Activated CD4-positive, alpha-beta T cell treated with anti-CD3 and anti-CD28 coated beads, Interleukin-2, amount 10 ng/mL, durations not matched to agents 24 days and 14 days (primary cell): ENCODE measurements at regions of chr6 and their contacts with region 1.

Region 1: GRCh38 chr6:30914076-30914853 is at the start of gene VARS2:
- DNase-seq: peak; percentile 98
- H3K4me3 Mint-ChIP-seq: peak within 1 kb of the TSS; percentile 92
- H3K27ac Mint-ChIP-seq: peak within 1 kb of the TSS; percentile 98
- H3K4me1 Mint-ChIP-seq: peaks cover 40% of the 10 kb centered on the region
- H3K27me3 Mint-ChIP-seq: no peaks in the 10 kb centered on the region
- total RNA-seq, gene VARS2: 74.8 and 84.2 TPM in 2 replicates

Region 2: DNA sequence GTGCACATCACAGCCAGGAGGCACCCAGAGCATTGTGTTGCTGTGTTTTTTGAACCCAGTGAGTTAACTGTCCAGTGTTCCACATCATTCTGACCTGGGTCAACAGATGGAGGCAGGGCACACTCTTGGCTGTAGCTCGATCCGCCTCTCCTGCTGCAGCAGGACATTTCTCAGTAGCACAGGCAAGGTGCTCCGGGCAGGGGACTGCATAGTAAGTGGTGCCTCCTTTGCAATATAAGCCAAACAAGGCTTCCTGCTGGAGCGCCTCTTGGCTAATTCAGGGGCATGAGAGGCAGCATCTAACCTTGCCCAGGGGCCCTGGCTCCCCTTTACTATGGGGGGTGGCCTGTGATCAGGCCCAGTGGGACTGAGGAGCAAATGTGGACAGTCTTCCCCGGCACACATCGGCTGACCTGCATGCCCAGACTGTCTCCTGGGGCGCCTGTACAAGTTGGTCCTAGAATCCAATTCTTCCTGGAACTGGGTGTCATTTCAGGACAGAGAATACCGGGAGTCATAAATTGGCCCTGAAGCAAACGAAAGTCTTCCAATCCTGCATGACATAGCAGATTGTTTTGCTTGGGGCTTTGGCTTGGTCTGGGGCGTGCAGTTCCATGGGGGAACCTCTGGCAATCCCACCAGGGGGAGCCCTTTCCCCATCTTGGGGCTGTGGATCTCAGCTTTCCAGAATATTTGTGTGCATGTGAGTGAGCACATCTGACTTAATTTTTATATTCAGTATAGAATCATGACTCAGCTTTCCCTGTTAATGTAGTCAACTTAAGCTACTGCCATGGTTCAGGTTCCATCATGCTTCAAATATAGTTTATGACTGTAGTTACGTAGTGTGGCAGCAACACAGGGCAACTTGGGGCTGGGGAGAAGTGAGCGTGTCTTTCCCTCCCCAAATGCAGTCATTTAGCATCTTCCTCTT is 86.0 kb before region 1 on chr6:
- intact Hi-C with region 1: loop called (anchors 2 kb)
- DNase-seq: peak; percentile 94
- H3K4me3 Mint-ChIP-seq: peak overlapping the region; percentile 86
- H3K27ac Mint-ChIP-seq: peak overlapping the region; percentile 94
- H3K4me1 Mint-ChIP-seq: peaks cover 70% of the 10 kb centered on the region
- H3K27me3 Mint-ChIP-seq: no peaks in the 10 kb centered on the region

Region 3: DNA sequence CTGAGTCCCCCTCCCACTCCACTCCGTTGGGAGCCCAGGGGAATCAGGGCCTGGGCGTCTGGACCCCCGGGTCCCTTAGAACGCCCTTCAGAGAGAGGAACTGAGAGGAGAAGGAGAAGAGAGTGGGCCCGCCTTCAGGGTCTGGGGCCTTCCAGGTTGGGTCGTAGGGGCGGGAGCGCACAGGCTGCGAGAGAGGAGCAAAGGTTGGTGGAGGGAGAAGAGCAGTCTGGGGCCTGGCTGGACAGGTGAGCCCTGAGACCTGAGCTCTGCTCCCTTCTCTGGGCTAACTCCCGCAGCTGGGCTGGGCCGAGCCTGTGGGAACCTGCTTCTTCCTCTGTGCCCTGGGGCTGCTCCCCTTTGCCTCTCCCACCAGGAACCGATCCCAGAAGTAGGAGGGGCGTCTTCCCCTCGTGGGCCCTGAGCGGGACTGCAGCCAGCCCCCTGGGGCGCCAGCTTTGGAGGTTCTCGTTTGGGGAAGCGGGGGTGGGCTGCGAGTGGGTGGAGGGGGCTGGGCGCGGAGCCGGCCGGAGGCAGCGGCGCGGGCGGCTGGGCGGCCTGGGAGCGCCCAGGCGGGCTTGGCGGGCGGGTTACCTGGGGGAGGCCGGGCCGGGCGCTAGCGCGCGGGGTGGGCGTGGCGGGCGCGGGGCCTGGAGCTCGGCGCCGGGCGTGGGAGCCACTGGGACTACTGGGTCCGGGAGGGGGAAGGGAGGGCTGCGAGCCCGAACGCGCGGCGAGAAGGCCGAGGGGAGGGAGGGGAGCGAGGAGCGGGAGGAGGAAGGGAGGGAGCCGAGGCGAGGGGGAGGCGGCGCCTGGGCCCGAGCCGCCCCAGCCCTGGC is 30.4 kb before region 1 on chr6 and contains the start of gene DDR1:
- intact Hi-C with region 1: loop called (anchors 2 kb)
- DNase-seq: peak; percentile 83
- H3K4me3 Mint-ChIP-seq: peak within 1 kb of the TSS; percentile 79
- H3K27ac Mint-ChIP-seq: peak within 1 kb of the TSS; percentile 71
- H3K4me1 Mint-ChIP-seq: peaks cover 38% of the 10 kb centered on the region
- H3K27me3 Mint-ChIP-seq: peaks cover 3% of the 10 kb centered on the region
- total RNA-seq, gene DDR1: 18.8 and 22.9 TPM in 2 replicates

Region 4: DNA sequence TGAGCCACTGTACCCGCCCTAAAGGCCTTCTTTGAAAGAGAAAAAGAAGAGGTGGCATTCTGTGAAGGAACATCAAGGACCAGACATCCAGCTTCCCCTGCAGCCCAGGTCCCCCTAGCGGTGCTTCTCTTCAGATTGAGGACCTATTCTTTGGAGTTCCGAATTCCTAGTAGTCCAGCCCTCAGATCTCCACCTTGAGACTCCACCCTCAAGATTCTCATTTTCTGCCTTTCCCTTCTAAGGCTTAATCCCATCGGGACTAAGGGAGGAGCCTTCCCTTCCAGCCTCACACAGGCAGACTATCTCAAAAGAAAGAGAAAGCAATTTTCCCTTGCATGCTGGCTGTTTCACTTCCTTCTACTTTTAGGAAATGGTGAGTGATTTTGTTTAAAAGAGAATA is 128.5 kb after region 1 on chr6:
- intact Hi-C with region 1: loop called (anchors 10 kb)
- DNase-seq: peak; percentile 74
- H3K4me3 Mint-ChIP-seq: peak overlapping the region; percentile 61
- H3K27ac Mint-ChIP-seq: no peak overlapping the region
- H3K4me1 Mint-ChIP-seq: peaks cover 7% of the 10 kb centered on the region
- H3K27me3 Mint-ChIP-seq: peaks cover 22% of the 10 kb centered on the region

Region 5: GRCh38 chr6:31068669-31069340 is 154.5 kb after region 1 on chr6:
- intact Hi-C with region 1: loop called (anchors 2 kb)
- DNase-seq: peak; percentile 91
- H3K4me3 Mint-ChIP-seq: no peak overlapping the region
- H3K27ac Mint-ChIP-seq: no peak overlapping the region
- H3K4me1 Mint-ChIP-seq: peaks cover 2% of the 10 kb centered on the region
- H3K27me3 Mint-ChIP-seq: peaks cover 8% of the 10 kb centered on the region

Region 6: GRCh38 chr6:31079656-31080261 is 165.5 kb after region 1 on chr6:
- intact Hi-C with region 1: loop called (anchors 2 kb)
- DNase-seq: peak; percentile 92
- H3K4me3 Mint-ChIP-seq: peak overlapping the region; percentile 28
- H3K27ac Mint-ChIP-seq: no peak overlapping the region
- H3K4me1 Mint-ChIP-seq: peaks cover 8% of the 10 kb centered on the region
- H3K27me3 Mint-ChIP-seq: peaks cover 15% of the 10 kb centered on the region

Region 7: GRCh38 chr6:31087494-31088089 is 173.3 kb after region 1 on chr6:
- intact Hi-C with region 1: loop called (anchors 2 kb)
- DNase-seq: peak; percentile 96
- H3K4me3 Mint-ChIP-seq: no peak overlapping the region
- H3K27ac Mint-ChIP-seq: no peak overlapping the region
- H3K4me1 Mint-ChIP-seq: peaks cover 11% of the 10 kb centered on the region
- H3K27me3 Mint-ChIP-seq: peaks cover 16% of the 10 kb centered on the region